ENCODE measurements at regions of chr4 and their contacts with region 1.

Region 1: DNA sequence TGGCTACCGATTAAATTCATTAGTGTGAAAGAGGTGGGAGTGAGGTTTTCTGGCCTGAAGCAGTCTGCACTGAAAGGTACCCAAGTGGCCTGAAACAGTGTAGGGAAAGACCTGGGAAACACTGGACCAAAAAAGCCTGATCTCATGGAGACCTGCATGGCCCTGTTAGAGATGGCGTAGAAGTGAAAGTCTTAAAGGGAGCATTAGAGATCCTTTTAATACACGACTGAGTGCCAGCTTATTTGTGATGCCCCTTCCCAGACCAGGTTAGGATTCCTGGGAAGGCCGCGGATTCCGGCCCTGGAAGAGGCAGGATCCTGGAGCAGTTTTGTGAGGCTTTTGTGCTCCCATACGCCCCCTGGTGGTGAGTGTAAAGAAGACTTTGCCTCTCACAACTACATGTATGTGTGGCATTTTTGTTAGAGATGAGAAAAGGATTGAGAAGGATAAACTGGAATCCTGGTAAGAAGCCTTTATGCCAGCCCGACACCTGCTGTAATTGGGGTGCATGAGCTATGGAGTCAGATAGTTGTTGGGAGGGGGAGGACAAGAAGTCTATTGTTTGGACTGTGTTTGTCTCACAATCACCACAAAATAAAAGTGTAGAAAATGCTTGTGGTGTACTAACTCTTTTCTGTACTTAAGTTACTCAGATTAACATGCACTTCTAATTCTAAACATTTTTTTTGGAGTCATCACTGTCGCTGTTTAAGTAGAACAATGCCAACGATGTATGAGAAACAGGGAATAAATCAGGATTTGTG is 54.0 kb downstream of the JADE1 start:
- DNase-seq: peak; percentile 73
- ATAC-seq: peak; percentile 87
- H3K4me3 ChIP-seq: no peak overlapping the region
- H3K27ac ChIP-seq: no peak overlapping the region
- H3K4me1 ChIP-seq: peaks cover 18% of the 10 kb centered on the region
- H3K27me3 ChIP-seq: no peaks in the 10 kb centered on the region
- CTCF ChIP-seq: peak; percentile 88

Region 2: DNA sequence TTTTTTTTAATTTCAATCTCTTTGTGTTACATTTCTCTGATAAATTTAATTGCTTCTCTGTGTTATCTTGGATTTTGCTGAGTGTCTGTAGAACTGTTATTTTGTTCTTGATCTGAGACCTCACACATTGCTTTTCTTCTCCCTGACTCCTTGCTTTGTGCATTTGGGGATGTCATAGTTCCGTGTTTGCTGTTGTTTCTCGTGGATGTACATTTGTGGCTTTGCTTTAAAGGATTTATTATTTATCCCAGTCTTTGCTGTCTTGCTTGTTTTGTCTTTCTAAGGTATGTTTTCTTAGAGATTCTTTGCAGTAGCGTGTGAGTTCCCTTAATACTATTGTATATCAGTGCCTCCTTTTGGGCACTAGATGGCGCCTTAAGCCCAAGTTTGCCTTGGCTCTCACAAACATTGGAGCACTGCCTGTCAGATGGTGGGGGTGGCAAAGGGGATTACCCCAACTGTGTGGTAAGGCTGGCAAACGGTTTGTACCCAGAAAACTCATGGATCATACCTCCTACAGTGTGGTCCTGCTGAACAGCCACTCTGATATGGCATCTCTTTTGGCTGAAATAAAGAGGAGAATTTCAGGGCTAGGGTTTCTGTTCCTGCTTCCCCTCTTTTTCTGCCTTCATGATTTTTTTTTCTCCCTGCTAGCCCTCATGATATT is 672.2 kb before region 1 on chr4:
- intact Hi-C with region 1: loop called (anchors 10 kb)
- DNase-seq: no peak
- ATAC-seq: peak; percentile 98
- H3K4me3 ChIP-seq: no peak overlapping the region
- H3K27ac ChIP-seq: no peak overlapping the region
- H3K4me1 ChIP-seq: peaks cover 3% of the 10 kb centered on the region
- H3K27me3 ChIP-seq: no peaks in the 10 kb centered on the region
- CTCF ChIP-seq: peak; percentile 89

Region 3: DNA sequence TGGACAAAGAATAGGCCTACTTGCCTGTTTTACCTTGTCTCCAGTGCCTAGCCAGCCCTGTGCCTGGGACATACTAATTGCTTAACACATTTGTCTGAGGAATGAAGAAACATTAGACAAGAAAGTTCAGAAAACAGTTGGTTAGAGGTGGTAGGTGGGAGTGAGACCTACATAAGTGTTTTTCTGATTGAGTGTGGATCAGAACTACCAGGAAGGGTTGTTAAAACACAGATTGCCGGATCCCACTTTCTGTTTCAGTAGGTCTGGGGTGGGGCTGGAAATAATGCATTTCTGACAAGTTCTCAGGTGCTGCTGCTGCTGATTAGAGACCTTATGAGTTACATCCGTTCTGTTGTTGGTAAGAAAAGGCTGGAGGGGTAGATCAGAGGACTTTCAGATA is 59.7 kb before region 1 on chr4:
- intact Hi-C with region 1: no loop called
- DNase-seq: no peak
- ATAC-seq: peak; percentile 46
- H3K4me3 ChIP-seq: no peak overlapping the region
- H3K27ac ChIP-seq: peak overlapping the region; percentile 37
- H3K4me1 ChIP-seq: no peaks in the 10 kb centered on the region
- H3K27me3 ChIP-seq: no peaks in the 10 kb centered on the region
- CTCF ChIP-seq: no peak

Region 4: GRCh38 chr4:128924951-128925350 is 61.5 kb after region 1 on chr4:
- intact Hi-C with region 1: no loop called
- DNase-seq: no peak
- ATAC-seq: no peak
- H3K4me3 ChIP-seq: no peak overlapping the region
- H3K27ac ChIP-seq: no peak overlapping the region
- H3K4me1 ChIP-seq: no peaks in the 10 kb centered on the region
- H3K27me3 ChIP-seq: no peaks in the 10 kb centered on the region
- CTCF ChIP-seq: no peak

Region 5: GRCh38 chr4:129246850-129247562 is 383.5 kb after region 1 on chr4:
- intact Hi-C with region 1: no loop called
- DNase-seq: no peak
- ATAC-seq: no peak
- H3K4me3 ChIP-seq: no peak overlapping the region
- H3K27ac ChIP-seq: no peak overlapping the region
- H3K4me1 ChIP-seq: no peaks in the 10 kb centered on the region
- H3K27me3 ChIP-seq: no peaks in the 10 kb centered on the region
- CTCF ChIP-seq: no peak

Measured in upper lobe of right lung (tissue), 1 donor.